Activated B cell treated with CpG ODN at 0.5 μM for 24 hours (primary cell): ENCODE measurements at regions of chr7 and their contacts with region 1.

Region 1: GRCh38 chr7:6447581-6448199 is at the start of gene DAGLB:
- DNase-seq: peak; percentile 95
- ATAC-seq: peak; percentile 88
- H3K4me3 Mint-ChIP-seq: peak within 1 kb of the TSS; percentile 95
- H3K27ac Mint-ChIP-seq: peak within 1 kb of the TSS; percentile 92
- H3K4me1 Mint-ChIP-seq: peaks cover 22% of the 10 kb centered on the region
- H3K27me3 Mint-ChIP-seq: no peaks in the 10 kb centered on the region
- CTCF ChIP-seq: no peak
- total RNA-seq, gene DAGLB: 13.3 and 18.3 TPM in 2 replicates

Region 2: GRCh38 chr7:5255832-5256231 is 1191.9 kb before region 1 on chr7:
- CTCF ChIA-PET with region 1: no interaction called
- POLR2A ChIA-PET with region 1: no interaction called
- intact Hi-C with region 1: no loop called
- DNase-seq: no peak
- ATAC-seq: no peak
- H3K4me3 Mint-ChIP-seq: no peak overlapping the region
- H3K27ac Mint-ChIP-seq: no peak overlapping the region
- H3K4me1 Mint-ChIP-seq: no peaks in the 10 kb centered on the region
- H3K27me3 Mint-ChIP-seq: peaks cover 6% of the 10 kb centered on the region
- CTCF ChIP-seq: no peak

Region 3: GRCh38 chr7:6057316-6058129 is 390.2 kb before region 1 on chr7:
- CTCF ChIA-PET with region 1: no interaction called
- POLR2A ChIA-PET with region 1: interaction called, 10 read pairs
- intact Hi-C with region 1: no loop called
- DNase-seq: no peak
- ATAC-seq: no peak
- H3K4me3 Mint-ChIP-seq: peak overlapping the region; percentile 96
- H3K27ac Mint-ChIP-seq: peak overlapping the region; percentile 94
- H3K4me1 Mint-ChIP-seq: peaks cover 26% of the 10 kb centered on the region
- H3K27me3 Mint-ChIP-seq: no peaks in the 10 kb centered on the region
- CTCF ChIP-seq: no peak

Region 4: DNA sequence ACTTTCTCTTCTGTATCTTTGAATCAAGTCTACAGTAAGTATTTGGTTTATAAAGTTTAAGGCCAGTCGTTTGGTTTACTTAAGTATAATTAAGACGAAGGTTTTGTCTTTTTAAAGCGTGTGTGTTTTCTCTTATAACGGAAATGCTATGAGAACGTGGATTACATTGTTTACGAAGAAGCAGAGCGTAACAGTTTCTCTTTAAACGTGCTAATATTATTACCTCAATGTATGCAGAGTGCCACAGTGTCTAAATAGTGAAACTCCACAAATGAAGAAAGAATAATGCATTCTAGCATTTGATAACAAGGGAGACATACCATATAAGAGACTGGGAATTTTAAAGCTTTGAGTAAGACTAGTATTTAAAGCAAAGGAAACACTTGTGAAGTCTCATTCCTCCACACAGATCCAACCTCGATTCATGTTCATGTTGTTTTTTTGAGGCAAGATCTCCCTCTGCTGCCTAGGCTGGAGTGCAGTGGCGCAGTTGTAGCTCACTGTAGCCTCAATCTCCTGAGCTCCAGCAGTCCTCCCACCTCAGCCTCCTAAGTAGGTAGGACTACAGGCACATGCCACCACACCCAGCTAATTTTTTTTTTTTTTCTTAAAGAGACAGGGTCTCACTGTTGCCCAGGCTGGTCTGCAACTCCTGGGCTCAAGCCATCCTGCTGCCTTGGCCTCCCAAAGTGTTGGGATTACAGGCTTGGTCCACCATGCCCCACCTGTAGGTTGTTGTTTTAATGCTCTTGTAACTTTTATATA is 341.4 kb before region 1 on chr7:
- CTCF ChIA-PET with region 1: no interaction called
- POLR2A ChIA-PET with region 1: no interaction called
- intact Hi-C with region 1: no loop called
- DNase-seq: no peak
- ATAC-seq: no peak
- H3K4me3 Mint-ChIP-seq: peak overlapping the region; percentile 89
- H3K27ac Mint-ChIP-seq: peak overlapping the region; percentile 88
- H3K4me1 Mint-ChIP-seq: peaks cover 35% of the 10 kb centered on the region
- H3K27me3 Mint-ChIP-seq: no peaks in the 10 kb centered on the region
- CTCF ChIP-seq: no peak

Region 5: GRCh38 chr7:6271060-6271658 is 176.5 kb before region 1 on chr7:
- CTCF ChIA-PET with region 1: no interaction called
- POLR2A ChIA-PET with region 1: no interaction called
- intact Hi-C with region 1: no loop called
- DNase-seq: peak; percentile 21
- ATAC-seq: peak; percentile 53
- H3K4me3 Mint-ChIP-seq: peak overlapping the region; percentile 89
- H3K27ac Mint-ChIP-seq: no peak overlapping the region
- H3K4me1 Mint-ChIP-seq: peaks cover 19% of the 10 kb centered on the region
- H3K27me3 Mint-ChIP-seq: peaks cover 8% of the 10 kb centered on the region
- CTCF ChIP-seq: no peak

Region 6: DNA sequence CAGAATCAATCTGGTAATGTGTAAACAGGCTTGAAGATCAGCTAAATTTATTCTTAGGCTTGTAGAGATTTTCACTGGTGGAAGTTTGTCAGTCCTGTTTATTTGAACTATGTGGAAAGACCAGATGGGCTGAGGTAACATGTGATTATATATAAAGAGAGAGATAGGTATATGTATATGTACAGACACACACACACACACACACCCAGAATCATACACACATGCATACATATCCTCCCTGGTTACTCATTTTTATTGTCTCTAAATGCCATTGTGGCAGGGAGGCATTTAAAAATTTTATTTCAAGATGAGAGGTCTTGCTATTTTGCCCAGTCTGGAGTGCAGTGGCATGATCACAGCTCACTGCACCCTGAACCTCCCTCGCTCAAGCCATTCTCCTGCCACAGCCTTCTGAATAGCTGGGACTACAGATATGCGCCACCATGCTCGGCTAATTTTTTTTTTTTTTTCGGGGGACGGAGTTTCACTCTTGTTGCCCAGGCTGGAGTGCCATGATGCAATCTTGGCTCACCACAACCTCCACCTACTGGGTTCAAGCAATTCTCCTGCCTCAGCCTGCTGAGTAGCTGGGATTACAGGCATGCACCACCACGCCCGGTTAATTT is 97.1 kb before region 1 on chr7:
- CTCF ChIA-PET with region 1: no interaction called
- POLR2A ChIA-PET with region 1: interaction called, 15 read pairs
- intact Hi-C with region 1: no loop called
- DNase-seq: no peak
- ATAC-seq: no peak
- H3K4me3 Mint-ChIP-seq: no peak overlapping the region
- H3K27ac Mint-ChIP-seq: peak overlapping the region; percentile 65
- H3K4me1 Mint-ChIP-seq: peaks cover 22% of the 10 kb centered on the region
- H3K27me3 Mint-ChIP-seq: no peaks in the 10 kb centered on the region
- CTCF ChIP-seq: no peak

Region 7: DNA sequence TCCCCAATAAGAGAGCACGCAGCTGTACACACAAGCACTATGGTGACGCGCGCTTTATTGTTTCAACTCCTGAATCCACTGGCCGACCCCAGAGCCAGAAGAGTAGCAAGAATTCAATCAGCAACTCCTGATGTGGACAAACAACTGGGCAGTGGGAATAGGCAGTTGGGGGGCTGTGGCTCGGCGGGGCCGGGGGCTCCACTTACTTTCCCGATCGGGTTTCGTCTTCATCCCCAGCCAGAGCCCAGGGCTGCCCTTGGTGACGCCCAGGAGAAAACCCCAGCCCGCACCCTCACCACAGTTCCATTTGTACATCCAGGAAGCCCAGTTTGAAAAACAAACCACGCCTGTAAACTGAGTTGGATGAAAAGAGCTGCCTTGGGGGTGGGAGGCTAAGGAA is 38.6 kb before region 1 on chr7:
- CTCF ChIA-PET with region 1: no interaction called
- POLR2A ChIA-PET with region 1: interaction called, 10 read pairs
- intact Hi-C with region 1: no loop called
- DNase-seq: no peak
- ATAC-seq: no peak
- H3K4me3 Mint-ChIP-seq: no peak overlapping the region
- H3K27ac Mint-ChIP-seq: no peak overlapping the region
- H3K4me1 Mint-ChIP-seq: no peaks in the 10 kb centered on the region
- H3K27me3 Mint-ChIP-seq: no peaks in the 10 kb centered on the region
- CTCF ChIP-seq: no peak

Region 8: DNA sequence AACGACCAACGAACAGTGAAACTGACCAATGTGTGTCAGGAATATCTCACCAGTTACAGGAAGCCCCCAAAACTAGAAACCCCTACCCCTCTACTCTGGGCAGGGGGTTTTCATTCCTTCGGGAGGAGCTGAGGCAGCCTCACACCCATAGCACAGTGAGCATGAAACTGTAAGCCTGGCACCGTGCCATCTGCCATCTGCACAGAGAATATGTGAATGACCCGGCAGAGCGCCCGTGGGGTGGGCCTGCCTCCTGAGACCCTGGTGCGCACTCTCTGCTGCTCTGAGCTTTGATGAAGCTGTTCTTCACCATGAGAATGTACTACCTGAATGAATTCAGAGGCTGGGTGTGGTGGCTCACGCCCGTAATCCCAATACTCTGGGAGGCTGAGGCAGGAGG is 27.0 kb before region 1 on chr7:
- CTCF ChIA-PET with region 1: no interaction called
- POLR2A ChIA-PET with region 1: interaction called, 11 read pairs
- intact Hi-C with region 1: no loop called
- DNase-seq: no peak
- ATAC-seq: no peak
- H3K4me3 Mint-ChIP-seq: no peak overlapping the region
- H3K27ac Mint-ChIP-seq: no peak overlapping the region
- H3K4me1 Mint-ChIP-seq: no peaks in the 10 kb centered on the region
- H3K27me3 Mint-ChIP-seq: no peaks in the 10 kb centered on the region
- CTCF ChIP-seq: no peak

Region 9: GRCh38 chr7:6435486-6436384 is 12.0 kb before region 1 on chr7:
- CTCF ChIA-PET with region 1: interaction called, 4 read pairs
- POLR2A ChIA-PET with region 1: interaction called, 17 read pairs
- intact Hi-C with region 1: loop called (anchors 1 kb)
- DNase-seq: peak; percentile 83
- ATAC-seq: peak; percentile 92
- H3K4me3 Mint-ChIP-seq: peak overlapping the region; percentile 76
- H3K27ac Mint-ChIP-seq: peak overlapping the region; percentile 76
- H3K4me1 Mint-ChIP-seq: peaks cover 43% of the 10 kb centered on the region
- H3K27me3 Mint-ChIP-seq: no peaks in the 10 kb centered on the region
- CTCF ChIP-seq: peak; percentile 65

Region 10: GRCh38 chr7:6577365-6578113 is 129.8 kb after region 1 on chr7 and contains the start of gene ZDHHC4:
- CTCF ChIA-PET with region 1: no interaction called
- POLR2A ChIA-PET with region 1: interaction called, 12 read pairs
- intact Hi-C with region 1: no loop called
- DNase-seq: peak; percentile 86
- ATAC-seq: peak; percentile 88
- H3K4me3 Mint-ChIP-seq: peak within 1 kb of the TSS; percentile 88
- H3K27ac Mint-ChIP-seq: peak within 1 kb of the TSS; percentile 89
- H3K4me1 Mint-ChIP-seq: peaks cover 26% of the 10 kb centered on the region
- H3K27me3 Mint-ChIP-seq: no peaks in the 10 kb centered on the region
- CTCF ChIP-seq: no peak
- total RNA-seq, gene ZDHHC4: 33.2 and 37.4 TPM in 2 replicates